Psoas muscle (tissue), 8 donors: ENCODE measurements at regions of chr2 and their contacts with region 1.

Region 1: GRCh38 chr2:24959761-24960160 is 12.0 kb downstream of the DNAJC27 start:
- DNase-seq: no peak
- ATAC-seq: no peak
- H3K4me3 ChIP-seq: no peak overlapping the region
- H3K27ac ChIP-seq: no peak overlapping the region
- H3K4me1 ChIP-seq: peaks cover 4% of the 10 kb centered on the region
- H3K27me3 ChIP-seq: no peaks in the 10 kb centered on the region
- CTCF ChIP-seq: no peak

Region 2: DNA sequence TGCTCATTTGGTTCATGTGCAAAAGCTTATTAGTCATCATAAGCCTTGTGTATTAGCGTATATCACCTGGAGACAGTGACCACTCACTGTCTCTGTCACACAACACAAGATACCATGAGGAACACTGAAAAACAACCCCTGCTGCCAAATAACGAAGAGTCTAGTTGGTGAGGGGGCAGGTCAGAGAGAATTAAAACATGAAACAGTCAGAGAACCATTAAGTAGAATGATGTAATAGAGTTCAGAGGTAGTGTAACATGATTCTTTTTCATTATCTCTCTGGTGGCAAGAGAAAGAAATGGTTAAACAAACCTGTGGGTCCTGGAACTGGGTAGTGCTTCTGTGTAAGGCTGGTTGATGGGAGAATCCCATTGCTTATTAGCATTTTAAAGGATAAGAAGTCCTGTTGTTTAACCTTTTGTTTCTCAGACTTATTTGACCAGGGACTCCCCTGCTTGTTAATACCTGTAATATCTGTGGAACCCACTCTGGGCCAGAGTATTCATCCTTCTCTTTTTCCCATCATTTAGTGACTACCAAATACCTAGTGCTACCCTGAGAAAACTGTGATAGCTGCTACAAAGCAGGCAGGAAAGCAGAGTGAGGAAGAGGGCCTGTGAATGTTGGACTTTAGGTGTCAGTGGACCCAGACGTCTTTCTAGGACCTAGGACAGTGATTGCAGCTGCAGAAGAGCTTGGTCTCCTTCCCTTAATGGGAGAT is 204.6 kb before region 1 on chr2:
- intact Hi-C with region 1: loop called in 1 of 2 experiments (anchors 5 kb)
- DNase-seq: no peak
- ATAC-seq: no peak
- H3K4me3 ChIP-seq: no peak overlapping the region
- H3K27ac ChIP-seq: no peak overlapping the region
- H3K4me1 ChIP-seq: no peaks in the 10 kb centered on the region
- H3K27me3 ChIP-seq: no peaks in the 10 kb centered on the region
- CTCF ChIP-seq: no peak